Left cardiac atrium (tissue), 4 donors: ENCODE measurements at regions of chr7 and their contacts with region 1.

Region 1: GRCh38 chr7:23462846-23463245 is 7.4 kb downstream of the IGF2BP3 start:
- DNase-seq: no peak
- ATAC-seq: peak; percentile 80 to 81

Region 2: DNA sequence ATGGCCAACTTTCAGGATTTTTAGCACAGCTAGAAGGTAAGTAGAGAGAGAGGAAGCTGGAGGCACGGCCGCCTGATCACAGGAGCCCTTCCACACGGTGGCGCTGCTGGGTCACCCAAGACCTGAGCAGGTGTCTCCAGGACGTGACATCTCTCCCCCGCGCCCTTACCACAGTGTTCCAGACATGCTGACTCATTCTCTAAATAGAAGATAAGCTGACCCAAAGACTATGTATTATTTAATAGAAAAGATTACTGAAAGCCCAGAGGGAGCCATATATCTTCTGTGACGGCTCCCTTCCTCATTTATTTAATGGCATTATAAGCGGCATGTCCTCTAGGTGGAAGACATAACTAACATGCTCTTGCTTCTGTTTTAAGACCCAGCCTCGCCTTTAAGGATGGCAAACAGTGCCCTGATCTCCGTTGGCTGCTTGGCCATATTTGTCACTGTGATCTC is 189.7 kb before region 1 on chr7:
- intact Hi-C with region 1: loop called (anchors 2 to 5 kb)
- DNase-seq: peak; percentile 88
- ATAC-seq: peak; percentile 66 to 94

Region 3: GRCh38 chr7:23721456-23721855 is 258.6 kb after region 1 on chr7:
- intact Hi-C with region 1: no loop called
- DNase-seq: no peak
- ATAC-seq: no peak